HEK293 (cell line): ENCODE measurements at regions of chr14 and their contacts with region 1.

Region 1: DNA sequence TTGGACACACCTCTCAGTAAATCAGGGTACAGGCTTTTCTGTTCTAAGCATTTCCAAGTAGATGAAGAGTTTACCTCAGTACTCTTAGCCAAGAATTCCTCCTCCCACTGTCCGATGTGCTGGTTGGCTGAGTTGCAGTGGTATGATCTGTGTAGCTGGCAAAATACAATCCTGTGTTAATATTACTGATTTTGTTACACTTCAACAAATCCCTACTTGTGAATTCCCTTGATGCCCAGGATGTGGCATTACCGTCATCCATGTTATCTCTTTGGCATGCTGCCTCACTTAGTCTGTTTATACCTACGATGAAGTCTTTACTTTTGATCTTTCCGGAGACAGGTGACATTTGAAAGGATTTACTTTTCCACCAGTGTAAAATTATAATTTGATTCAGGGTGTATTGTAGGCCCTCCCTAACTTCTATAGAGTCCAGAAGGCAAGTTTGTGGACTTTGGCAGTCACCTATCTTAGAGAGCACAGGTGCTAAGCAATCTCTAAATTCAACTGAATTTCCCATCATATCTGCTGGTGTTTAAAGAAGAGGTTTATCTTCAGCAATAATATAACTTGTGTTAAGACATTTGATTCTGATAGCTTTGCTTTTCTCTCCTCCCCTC is 10.1 kb downstream of the CCDC196 start:
- H3K4me3 ChIP-seq: no peak overlapping the region
- H3K27ac ChIP-seq: no peak overlapping the region
- H3K4me1 ChIP-seq: no peaks in the 10 kb centered on the region; the same call in 1 of the 2 replicates
- CTCF ChIP-seq: no peak

Region 2: DNA sequence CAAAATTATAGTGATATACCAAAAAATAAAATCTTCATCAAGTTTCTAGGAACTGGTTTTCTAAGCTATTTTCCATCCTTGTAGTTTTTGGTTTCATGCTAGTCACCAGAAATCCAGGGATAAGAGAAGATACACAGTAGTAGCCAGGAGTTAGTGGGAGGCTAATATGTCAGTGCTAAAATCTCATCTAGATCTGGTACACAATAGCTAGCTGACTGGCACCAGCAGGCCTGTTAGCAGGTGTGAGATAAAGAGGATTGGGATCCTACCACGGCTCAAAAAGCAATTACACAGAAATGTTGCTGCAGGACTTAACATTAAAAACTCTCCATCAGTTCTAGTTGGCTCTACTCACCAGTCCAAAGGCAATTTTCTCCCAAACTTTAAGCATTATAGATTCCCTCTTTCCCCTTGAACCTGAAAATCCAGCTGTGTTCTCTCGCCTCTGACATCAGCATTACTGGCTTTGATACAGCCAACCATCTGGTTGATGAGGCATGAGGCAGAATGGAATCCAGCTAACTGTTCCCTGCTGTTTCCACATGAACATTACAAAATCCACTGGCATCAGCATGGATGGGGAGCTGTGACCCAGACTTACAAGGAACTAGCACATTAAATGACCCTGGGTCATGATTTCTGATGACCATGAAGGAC is 51.9 kb before region 1 on chr14:
- CTCF ChIA-PET with region 1: no interaction called
- POLR2A ChIA-PET with region 1: no interaction called
- H3K4me3 ChIP-seq: no peak overlapping the region
- H3K27ac ChIP-seq: no peak overlapping the region
- H3K4me1 ChIP-seq: no peaks in the 10 kb centered on the region
- CTCF ChIP-seq: no peak

Region 3: DNA sequence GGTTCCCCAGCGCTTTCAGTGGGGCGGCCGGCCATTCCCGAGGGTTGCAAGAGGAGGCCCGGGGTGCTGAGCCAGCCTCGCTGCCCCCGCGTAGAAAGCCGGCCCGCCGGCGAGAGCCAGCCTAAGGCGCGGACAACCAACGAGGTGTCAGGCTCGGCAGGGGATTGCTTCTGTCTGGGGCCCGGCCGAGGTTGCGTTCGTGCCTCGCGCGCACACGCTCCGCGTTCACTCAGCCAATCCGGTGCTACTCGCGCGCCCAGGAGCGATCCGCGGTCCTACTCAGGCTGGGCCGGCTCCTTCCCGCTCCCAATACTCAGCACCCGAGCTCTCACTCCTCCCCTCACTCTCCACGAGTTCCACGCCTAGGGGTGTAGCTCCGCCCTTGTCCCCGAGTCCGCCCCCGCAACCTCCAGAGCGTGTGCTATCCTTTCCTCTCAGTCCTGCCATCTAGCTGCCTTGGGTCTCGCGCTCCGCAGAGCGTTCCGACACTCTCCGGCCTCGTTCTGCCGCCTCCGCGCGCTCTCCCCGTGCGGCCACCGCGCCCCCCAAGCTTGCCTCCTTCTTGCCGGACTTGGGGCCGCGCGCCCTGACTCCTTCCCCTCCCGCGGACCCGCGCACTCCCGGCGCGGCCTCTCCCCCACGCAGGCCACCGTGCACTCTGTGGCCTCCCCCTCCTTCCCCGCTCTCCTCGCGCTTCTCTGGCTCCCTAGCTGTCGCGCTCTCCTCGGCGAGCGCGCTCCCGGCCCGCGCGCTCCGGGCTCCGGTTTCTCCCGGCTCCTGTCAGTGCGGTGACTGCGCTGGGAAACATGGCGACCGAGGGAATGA is 11.6 kb after region 1 on chr14 and contains the start of gene GPHN:
- CTCF ChIA-PET with region 1: interaction called, 6 read pairs
- POLR2A ChIA-PET with region 1: interaction called, 15 read pairs
- H3K4me3 ChIP-seq: peak within 1 kb of the TSS; percentile 93
- H3K27ac ChIP-seq: peak within 1 kb of the TSS; percentile 95
- H3K4me1 ChIP-seq: peaks cover 8% of the 10 kb centered on the region
- CTCF ChIP-seq: peak; percentile 88

Region 4: DNA sequence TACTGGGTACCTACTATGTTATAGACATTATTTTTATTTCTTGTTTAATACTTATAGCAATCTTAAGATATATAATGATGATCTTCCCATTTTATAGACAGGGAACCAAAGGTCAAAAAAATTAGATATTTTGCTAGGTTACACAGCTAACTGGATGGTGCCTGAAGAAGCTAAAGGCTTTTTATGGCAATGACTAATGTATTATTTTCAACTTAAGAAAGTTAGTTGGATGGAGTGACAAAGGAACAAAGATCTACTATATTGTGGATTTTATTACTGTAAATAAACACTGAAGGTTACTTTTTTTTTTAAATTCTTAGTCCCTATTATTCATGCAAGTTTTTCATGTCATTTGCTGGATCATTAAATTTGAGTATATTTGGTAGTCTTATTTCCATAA is 239.6 kb after region 1 on chr14:
- CTCF ChIA-PET with region 1: no interaction called
- POLR2A ChIA-PET with region 1: no interaction called
- H3K4me3 ChIP-seq: no peak overlapping the region
- H3K27ac ChIP-seq: no peak overlapping the region
- H3K4me1 ChIP-seq: no peaks in the 10 kb centered on the region
- CTCF ChIP-seq: no peak